ENCODE measurements at regions of chr1 and their contacts with region 1.

Region 1: DNA sequence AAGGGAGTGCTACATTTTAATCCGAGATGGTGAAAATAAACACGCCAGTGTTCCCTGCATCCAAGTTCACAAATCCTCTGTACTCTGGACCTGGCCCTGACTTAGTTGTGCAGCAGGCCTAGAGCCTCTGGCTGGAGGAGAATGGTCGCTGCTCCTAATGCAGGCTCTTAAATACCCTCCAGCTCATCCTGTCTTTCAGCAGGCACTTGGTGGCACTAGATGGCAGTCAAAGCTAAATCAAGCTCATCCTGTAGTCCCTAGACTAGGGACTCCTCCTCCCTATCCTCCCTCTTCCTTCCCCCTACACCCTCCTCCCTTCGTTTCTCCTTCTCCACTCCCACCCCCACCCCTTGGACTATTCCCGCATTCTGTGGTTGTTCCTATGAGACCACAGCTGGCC is 41.6 kb upstream of the MTR start:
- DNase-seq: peak; percentile 54
- ATAC-seq: peak; percentile 94
- H3K4me3 ChIP-seq: no peak overlapping the region
- H3K27ac ChIP-seq: no peak overlapping the region
- H3K4me1 ChIP-seq: no peaks in the 10 kb centered on the region
- H3K27me3 ChIP-seq: peaks cover 48% of the 10 kb centered on the region
- CTCF ChIP-seq: peak; percentile 52

Region 2: GRCh38 chr1:235866913-235867845 is 886.3 kb before region 1 on chr1:
- CTCF ChIA-PET with region 1: no interaction called
- POLR2A ChIA-PET with region 1: no interaction called
- intact Hi-C with region 1: no loop called
- DNase-seq: peak; percentile 93
- ATAC-seq: peak; percentile 75
- H3K4me3 ChIP-seq: peak overlapping the region; percentile 88
- H3K27ac ChIP-seq: peak overlapping the region; percentile 4; the same call in 1 of the 2 replicates
- H3K4me1 ChIP-seq: peaks cover 21% of the 10 kb centered on the region
- H3K27me3 ChIP-seq: no peaks in the 10 kb centered on the region
- CTCF ChIP-seq: no peak

Region 3: DNA sequence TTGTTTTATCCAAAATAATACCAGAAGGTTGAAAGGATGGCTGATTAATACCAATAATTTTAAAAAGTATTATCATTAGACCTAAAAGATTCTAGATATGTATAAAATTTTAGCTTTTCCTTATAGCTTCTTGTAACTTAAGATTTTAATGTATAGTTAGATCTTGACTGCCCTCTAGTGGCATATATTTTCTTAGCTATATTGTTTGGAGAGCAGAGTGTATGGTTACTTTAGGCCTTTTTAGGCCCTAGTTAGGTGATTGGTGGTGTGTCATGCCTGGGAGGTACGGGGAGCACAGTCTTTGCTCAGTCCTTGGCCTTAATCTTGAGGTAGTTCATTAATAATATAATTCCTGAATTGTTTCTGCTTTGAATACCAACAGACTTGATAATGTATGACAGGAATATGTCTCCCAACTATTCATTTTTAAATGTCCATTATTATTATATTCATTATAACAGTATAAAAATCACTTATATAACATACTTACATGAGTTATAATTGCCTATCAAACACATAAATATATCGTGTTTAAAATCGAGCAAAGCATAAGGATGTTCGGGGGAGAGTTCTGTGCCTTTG is 808.8 kb after region 1 on chr1:
- CTCF ChIA-PET with region 1: interaction called, 14 read pairs
- POLR2A ChIA-PET with region 1: no interaction called
- intact Hi-C with region 1: loop called (anchors 10 kb)
- DNase-seq: peak; percentile 84
- ATAC-seq: peak; percentile 80
- H3K4me3 ChIP-seq: no peak overlapping the region
- H3K27ac ChIP-seq: no peak overlapping the region
- H3K4me1 ChIP-seq: no peaks in the 10 kb centered on the region
- H3K27me3 ChIP-seq: peaks cover 23% of the 10 kb centered on the region; the same call in 1 of the 2 replicates
- CTCF ChIP-seq: peak; percentile 64

Measured in PC-3 (cell line).